Naive thymus-derived CD4-positive, alpha-beta T cell (primary cell): ENCODE measurements at regions of chr16 and their contacts with region 1.

Region 1: DNA sequence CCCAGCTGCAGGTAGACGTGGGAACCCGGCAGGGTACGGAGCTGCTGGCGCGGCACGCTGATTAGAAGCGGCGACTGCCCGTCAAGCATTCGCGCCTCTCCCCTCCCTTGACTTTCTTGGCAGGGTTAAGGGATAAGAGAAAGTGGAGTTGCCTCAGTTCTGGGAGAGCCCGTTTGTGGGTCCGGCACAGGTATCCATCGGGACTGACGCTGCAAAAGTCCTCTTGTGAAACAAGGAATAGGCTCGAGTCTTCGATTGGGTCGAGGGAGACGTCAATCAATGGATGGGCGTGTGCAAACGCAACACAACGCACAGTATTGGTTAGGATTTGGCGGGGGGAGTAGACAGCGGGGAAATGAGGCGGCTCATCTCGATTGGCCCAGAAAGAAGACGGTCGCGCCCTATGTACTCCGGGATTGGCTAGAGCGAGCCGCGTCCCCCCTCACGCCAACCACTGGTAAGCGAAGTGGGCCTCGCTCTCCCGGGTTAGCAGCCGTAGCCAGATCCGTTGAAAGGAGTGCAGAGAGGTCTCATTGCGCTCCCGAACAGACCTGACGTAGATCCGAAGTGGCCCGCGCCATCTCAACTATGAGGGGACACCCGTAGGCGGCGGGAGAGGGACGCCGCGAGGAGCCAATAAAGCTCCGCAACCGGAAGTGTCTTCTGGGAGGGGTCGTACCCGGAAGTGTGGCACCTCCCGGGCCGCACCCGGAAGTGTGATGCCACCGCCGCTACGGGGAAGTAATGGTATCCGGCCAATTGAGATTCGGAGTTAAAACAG is at the start of gene MON1B:
- DNase-seq: peak; percentile 86 to 98 (median 97)
- ATAC-seq: peak; percentile 96
- H3K4me3 ChIP-seq: peak within 1 kb of the TSS; percentile 97
- H3K4me3 Mint-ChIP-seq: peak within 1 kb of the TSS; percentile 90 to 99 (median 96)
- H3K27ac ChIP-seq: peak within 1 kb of the TSS; percentile 86
- H3K27ac Mint-ChIP-seq: peak within 1 kb of the TSS; percentile 98 to 100 (median 100)
- H3K4me1 ChIP-seq: peaks cover 13 to 23% of the 10 kb centered on the region in 2 donors
- H3K4me1 Mint-ChIP-seq: peaks cover 36 to 55% (median 46%) of the 10 kb centered on the region in 7 donors
- H3K27me3 ChIP-seq: no peaks in the 10 kb centered on the region
- H3K27me3 Mint-ChIP-seq: peaks cover 0 to 10% (median 4%) of the 10 kb centered on the region in 5 donors
- total RNA-seq, gene MON1B: 60.8 to 87.2 (median 67.3) TPM

Region 2: GRCh38 chr16:75519881-75520280 is 1670.8 kb before region 1 on chr16:
- CTCF ChIA-PET with region 1: no interaction called
- POLR2A ChIA-PET with region 1: no interaction called
- intact Hi-C with region 1: loop called (anchors 1 to 2 kb)
- DNase-seq: no peak
- ATAC-seq: no peak
- H3K4me3 ChIP-seq: no peak overlapping the region
- H3K4me3 Mint-ChIP-seq: no peak overlapping the region
- H3K27ac ChIP-seq: no peak overlapping the region
- H3K27ac Mint-ChIP-seq: no peak overlapping the region
- H3K4me1 ChIP-seq: peaks cover 0 to 3% of the 10 kb centered on the region in 2 donors
- H3K4me1 Mint-ChIP-seq: peaks cover 5 to 17% (median 13%) of the 10 kb centered on the region in 7 donors
- H3K27me3 ChIP-seq: no peaks in the 10 kb centered on the region
- H3K27me3 Mint-ChIP-seq: peaks cover 0 to 9% (median 0%) of the 10 kb centered on the region in 5 donors

Region 3: DNA sequence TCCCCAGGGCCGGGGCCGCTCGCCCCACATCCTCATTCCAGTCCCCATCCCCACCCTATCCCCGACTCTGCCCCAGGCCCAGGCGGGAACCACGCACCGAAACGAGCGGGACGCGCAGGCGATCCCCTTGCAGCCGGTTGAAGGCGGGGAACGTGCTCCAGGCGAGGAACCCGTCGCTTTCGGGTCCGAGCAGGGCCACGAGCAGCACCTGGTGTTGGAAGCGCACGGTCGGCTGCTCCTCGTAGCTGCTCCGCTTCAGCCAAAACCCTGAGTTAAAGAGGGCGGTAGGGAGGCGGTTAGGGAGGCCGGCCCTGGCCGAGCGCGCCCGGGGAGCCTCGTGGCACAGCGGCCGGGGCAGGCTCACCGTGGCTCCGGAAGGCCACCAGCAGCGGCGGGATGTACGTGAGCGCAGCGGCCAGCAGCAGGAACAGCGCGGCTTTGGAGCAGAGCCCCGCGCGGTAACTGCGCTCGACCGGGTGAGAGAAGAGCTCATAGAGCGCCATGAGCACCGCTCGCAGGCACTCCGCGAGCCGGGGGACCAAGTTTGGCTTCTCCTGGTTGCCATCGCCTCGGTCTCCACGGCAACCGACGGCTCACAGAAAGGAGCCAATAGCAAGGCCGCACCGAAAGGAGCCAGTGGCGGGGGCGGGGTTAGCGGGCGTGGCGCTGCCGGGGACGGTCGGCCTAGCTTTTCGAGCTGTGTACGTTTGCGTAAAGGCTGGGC is 1634.8 kb before region 1 on chr16 and contains the start of gene TMEM231:
- CTCF ChIA-PET with region 1: no interaction called
- POLR2A ChIA-PET with region 1: no interaction called
- intact Hi-C with region 1: loop called (anchors 1 to 2 kb)
- DNase-seq: peak; percentile 91 to 97 (median 93)
- ATAC-seq: peak; percentile 98
- H3K4me3 ChIP-seq: peak within 1 kb of the TSS; percentile 84
- H3K4me3 Mint-ChIP-seq: peak within 1 kb of the TSS; percentile 74 to 93 (median 88)
- H3K27ac ChIP-seq: peak within 1 kb of the TSS; percentile 66
- H3K27ac Mint-ChIP-seq: peak within 1 kb of the TSS; percentile 81 to 97 (median 89)
- H3K4me1 ChIP-seq: peaks cover 10% of the 10 kb centered on the region in 2 donors
- H3K4me1 Mint-ChIP-seq: peaks cover 5 to 14% (median 10%) of the 10 kb centered on the region in 7 donors
- H3K27me3 ChIP-seq: no peaks in the 10 kb centered on the region
- H3K27me3 Mint-ChIP-seq: peaks cover 0 to 33% (median 5%) of the 10 kb centered on the region in 5 donors
- total RNA-seq, gene TMEM231: 1.5 to 3.9 (median 3.4) TPM

Region 4: DNA sequence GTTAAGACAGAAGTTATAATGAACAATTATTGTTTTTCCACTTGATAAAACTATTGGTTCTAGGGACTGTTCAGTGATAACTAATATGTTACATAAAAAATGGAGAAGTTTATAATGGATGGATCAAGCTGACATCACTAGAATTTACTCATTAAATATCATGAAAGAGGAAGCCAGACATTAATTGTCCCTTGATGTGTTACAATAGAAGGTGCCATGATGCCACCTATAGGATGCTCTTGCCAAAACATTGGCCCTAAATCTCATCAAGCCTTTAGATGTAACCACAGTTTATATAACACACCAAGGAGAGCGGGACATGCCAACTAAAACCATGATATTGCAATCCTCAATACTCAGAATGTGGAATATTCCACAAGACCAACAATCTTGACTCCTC is 147.6 kb before region 1 on chr16:
- CTCF ChIA-PET with region 1: no interaction called
- POLR2A ChIA-PET with region 1: no interaction called
- intact Hi-C with region 1: no loop called
- DNase-seq: no peak
- ATAC-seq: no peak
- H3K4me3 ChIP-seq: no peak overlapping the region
- H3K4me3 Mint-ChIP-seq: no peak overlapping the region
- H3K27ac ChIP-seq: no peak overlapping the region
- H3K27ac Mint-ChIP-seq: no peak overlapping the region
- H3K4me1 ChIP-seq: no peaks in the 10 kb centered on the region
- H3K4me1 Mint-ChIP-seq: no peaks in the 10 kb centered on the region
- H3K27me3 ChIP-seq: no peaks in the 10 kb centered on the region
- H3K27me3 Mint-ChIP-seq: peaks cover 0 to 14% (median 3%) of the 10 kb centered on the region in 5 donors

Region 5: GRCh38 chr16:77143364-77143763 is 47.3 kb before region 1 on chr16:
- CTCF ChIA-PET with region 1: no interaction called
- POLR2A ChIA-PET with region 1: no interaction called
- intact Hi-C with region 1: no loop called
- DNase-seq: no peak
- ATAC-seq: no peak
- H3K4me3 ChIP-seq: no peak overlapping the region
- H3K4me3 Mint-ChIP-seq: no peak overlapping the region
- H3K27ac ChIP-seq: no peak overlapping the region
- H3K27ac Mint-ChIP-seq: no peak overlapping the region
- H3K4me1 ChIP-seq: no peaks in the 10 kb centered on the region
- H3K4me1 Mint-ChIP-seq: no peaks in the 10 kb centered on the region
- H3K27me3 ChIP-seq: no peaks in the 10 kb centered on the region
- H3K27me3 Mint-ChIP-seq: peaks cover 0 to 19% (median 16%) of the 10 kb centered on the region in 5 donors

Region 6: DNA sequence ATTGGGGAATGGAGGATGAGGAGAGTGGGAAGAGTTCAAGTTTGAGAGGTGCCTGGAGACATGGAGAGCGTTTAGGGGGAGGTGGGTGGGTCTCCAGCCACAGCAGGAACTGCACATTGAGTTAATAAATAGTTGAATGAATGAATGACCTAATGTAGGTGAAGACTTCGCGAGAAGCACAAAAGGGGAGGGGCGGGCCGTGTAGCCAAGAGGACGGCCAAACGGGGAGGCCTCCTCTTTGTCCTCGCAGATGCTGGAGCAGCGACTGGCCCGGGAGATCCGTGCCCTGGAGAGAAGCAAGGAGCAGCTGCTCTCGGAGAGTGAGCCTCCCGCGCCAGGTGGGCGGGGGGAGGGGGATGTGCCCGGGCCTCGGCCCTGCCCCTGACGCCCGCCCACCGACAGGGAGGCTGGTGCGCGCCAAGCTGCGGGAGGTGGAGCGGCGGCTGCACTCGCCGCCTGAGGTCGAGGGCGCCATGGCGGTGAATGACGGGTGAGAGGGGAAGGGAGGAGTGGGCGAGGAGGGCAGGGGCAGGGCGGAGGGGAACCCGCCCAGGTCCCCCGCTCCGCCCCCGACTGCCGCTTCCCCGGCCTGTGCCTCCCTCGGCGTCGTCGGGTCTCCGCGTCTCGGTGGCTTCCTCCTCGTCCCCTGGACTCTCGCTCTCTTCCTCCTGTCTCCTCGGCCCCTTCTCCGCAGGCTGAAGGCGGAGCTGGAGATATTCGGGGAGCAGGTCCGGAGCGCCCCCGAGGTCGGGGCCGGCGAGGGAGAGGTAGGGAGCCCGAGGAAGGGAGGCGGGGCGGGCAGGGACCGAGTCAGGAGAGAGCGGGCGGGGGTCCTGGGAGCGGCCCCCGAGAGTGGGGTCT is 21.4 kb after region 1 on chr16:
- CTCF ChIA-PET with region 1: no interaction called
- POLR2A ChIA-PET with region 1: interaction called, 30 read pairs
- intact Hi-C with region 1: loop called (anchors 1 kb)
- DNase-seq: peak; percentile 57 to 84 (median 76)
- ATAC-seq: peak; percentile 86
- H3K4me3 ChIP-seq: peak overlapping the region; percentile 69
- H3K4me3 Mint-ChIP-seq: peak overlapping the region; percentile 83 to 92 (median 88)
- H3K27ac ChIP-seq: peak overlapping the region; percentile 85
- H3K27ac Mint-ChIP-seq: peak overlapping the region; percentile 56 to 92 (median 81)
- H3K4me1 ChIP-seq: peaks cover 0 to 4% of the 10 kb centered on the region in 2 donors
- H3K4me1 Mint-ChIP-seq: peaks cover 8 to 15% (median 14%) of the 10 kb centered on the region in 7 donors
- H3K27me3 ChIP-seq: no peaks in the 10 kb centered on the region
- H3K27me3 Mint-ChIP-seq: peaks cover 0 to 5% (median 0%) of the 10 kb centered on the region in 5 donors

Region 7: DNA sequence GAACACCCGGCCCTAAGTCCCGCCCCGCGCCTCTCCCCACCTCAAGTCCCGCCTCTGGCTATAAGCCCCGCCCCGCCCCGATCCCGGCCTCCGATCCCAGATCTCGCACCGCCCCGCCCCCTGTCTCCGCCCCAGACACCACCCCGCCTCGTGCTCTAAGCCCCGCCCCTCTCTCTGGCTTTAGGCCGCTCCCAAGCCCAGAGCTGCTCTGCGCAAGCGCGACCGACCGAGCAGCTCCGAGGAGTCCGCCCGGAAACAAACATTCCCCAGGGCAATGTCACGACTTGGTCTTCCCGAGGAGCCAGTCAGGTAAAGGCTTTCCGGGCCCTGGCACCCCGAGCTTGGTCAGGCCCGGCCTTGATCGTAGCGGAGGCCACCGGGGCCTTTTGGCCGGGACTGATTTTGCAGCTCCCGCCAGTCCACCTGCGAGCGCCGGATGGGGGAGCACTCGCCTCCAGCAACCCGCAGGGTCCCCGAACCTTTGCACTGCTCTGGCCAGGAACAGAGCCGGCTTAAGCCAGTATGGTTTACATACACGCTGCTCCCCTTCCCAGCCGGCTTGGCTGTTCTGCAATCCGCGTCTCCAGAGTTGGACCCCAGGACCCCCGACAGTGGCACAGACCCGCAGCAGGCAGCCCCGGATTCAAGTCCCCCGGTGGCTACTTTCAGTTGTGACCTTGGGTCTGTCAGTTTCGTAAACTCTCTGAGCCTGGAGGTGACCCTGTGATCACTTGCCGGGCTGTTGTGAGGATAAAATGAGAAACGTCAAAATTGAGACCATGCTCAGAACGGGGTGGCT is 531.8 kb after region 1 on chr16 and contains the start of gene NUDT7:
- CTCF ChIA-PET with region 1: no interaction called
- POLR2A ChIA-PET with region 1: no interaction called
- intact Hi-C with region 1: loop called (anchors 1 kb)
- DNase-seq: peak; percentile 78 to 98 (median 88)
- ATAC-seq: peak; percentile 98
- H3K4me3 ChIP-seq: peak within 1 kb of the TSS; percentile 76
- H3K4me3 Mint-ChIP-seq: peak within 1 kb of the TSS; percentile 86 to 94 (median 90)
- H3K27ac ChIP-seq: peak within 1 kb of the TSS; percentile 71
- H3K27ac Mint-ChIP-seq: peak within 1 kb of the TSS; percentile 51 to 91 (median 85)
- H3K4me1 ChIP-seq: peaks cover 5 to 9% of the 10 kb centered on the region in 2 donors
- H3K4me1 Mint-ChIP-seq: peaks cover 7 to 21% (median 15%) of the 10 kb centered on the region in 7 donors
- H3K27me3 ChIP-seq: no peaks in the 10 kb centered on the region
- H3K27me3 Mint-ChIP-seq: no peaks in the 10 kb centered on the region
- total RNA-seq, gene NUDT7: 2.1 to 10.9 (median 8.2) TPM